ENCODE measurements at regions of chr1 and their contacts with region 1.

Region 1: DNA sequence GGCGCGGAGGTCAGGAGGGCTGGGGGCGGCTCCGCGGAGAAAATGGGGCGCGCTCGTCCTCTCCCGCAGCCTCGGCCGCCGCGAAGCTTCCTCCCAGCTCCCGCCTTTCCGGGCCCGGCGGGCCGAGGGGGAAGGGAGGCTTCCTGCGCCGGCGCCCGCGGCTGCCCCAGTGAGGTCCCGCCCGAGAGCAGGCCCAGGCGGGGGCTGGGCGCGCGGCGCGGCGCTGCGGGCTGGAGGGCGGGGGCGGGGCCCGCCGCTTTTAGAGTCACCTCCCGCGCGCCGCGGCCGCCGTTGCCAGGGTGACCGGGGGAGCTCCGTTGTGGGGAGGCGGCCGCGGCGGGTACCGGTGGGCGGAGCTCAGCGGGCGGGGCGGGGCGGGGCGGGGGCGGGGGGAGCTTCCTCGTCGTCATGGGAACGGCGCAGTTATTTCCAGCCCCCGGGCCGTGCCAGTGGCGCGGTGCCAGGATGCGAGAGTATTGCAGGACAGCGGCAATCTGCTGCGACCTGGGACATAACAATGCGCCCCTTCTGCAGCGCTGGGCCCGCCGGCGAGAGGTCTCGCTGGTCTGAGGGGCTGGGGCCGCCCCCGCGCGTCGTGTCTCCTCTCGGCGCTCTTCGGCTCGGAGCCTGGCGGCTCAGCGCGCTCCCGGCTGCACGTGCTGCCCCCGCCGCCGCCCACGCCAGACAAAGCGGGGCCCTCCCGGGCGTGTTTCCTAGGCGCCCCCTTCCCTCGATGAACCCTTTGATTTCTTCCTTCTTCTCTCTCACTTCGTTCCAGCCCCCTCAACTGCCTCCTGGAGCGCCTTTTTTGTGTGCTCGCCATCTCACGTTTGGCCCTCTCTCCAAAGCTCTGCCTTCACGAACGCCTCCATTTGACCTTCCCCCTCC is 16.9 kb downstream of the IER5 start:
- DNase-seq: peak; percentile 83
- ATAC-seq: peak; percentile 93
- H3K4me3 ChIP-seq: peak overlapping the region; percentile 84
- H3K27ac ChIP-seq: peak overlapping the region; percentile 86
- H3K4me1 ChIP-seq: peaks cover 30% of the 10 kb centered on the region
- H3K27me3 ChIP-seq: no peaks in the 10 kb centered on the region
- CTCF ChIP-seq: no peak
- POLR2A ChIP-seq: peak; percentile 53
- RAD21 ChIP-seq: no peak

Region 2: GRCh38 chr1:181028196-181028595 is 77.2 kb before region 1 on chr1:
- CTCF ChIA-PET with region 1: no interaction called
- POLR2A ChIA-PET with region 1: no interaction called
- dilution Hi-C with region 1: no loop called
- in situ Hi-C with region 1: no loop called
- intact Hi-C with region 1: loop called (anchors 2 kb)
- DNase-seq: peak; percentile 86
- ATAC-seq: peak; percentile 79
- H3K4me3 ChIP-seq: no peak overlapping the region
- H3K27ac ChIP-seq: no peak overlapping the region
- H3K4me1 ChIP-seq: peaks cover 6% of the 10 kb centered on the region
- H3K27me3 ChIP-seq: no peaks in the 10 kb centered on the region
- CTCF ChIP-seq: no peak
- POLR2A ChIP-seq: no peak
- RAD21 ChIP-seq: no peak

Region 3: DNA sequence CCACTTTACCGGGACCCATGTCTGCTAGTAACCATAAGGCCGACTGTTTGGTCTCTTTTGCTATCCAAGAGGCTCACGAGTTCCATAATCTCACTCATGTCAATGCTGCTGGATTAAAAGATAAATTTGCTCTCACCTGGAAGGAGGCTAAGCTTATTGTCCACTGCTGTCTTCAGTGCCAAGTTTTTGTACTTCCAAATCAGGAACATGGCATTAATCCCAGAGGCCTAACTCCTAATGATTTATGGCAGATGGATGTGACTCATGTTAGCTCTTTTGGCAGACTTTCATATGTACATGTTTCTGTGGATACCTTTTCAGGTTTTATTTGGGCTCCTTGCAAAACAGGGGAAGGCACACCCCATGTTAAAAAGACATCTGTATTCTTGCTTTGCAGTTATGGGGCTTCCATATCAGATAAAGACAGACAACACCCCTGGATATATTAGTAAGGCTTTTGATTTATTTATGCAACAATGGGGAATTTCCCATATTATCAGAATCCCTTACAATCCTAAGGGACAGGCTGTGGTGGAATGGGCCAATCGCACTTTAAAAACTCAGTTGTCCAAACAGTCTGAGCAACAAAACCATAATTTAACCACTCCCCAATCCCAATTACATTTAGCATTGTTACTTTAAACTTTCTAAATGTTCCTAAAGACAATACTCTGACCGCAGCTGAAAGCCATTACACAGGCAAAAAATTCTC is 145.8 kb after region 1 on chr1:
- CTCF ChIA-PET with region 1: no interaction called
- POLR2A ChIA-PET with region 1: no interaction called
- dilution Hi-C with region 1: no loop called
- in situ Hi-C with region 1: no loop called
- intact Hi-C with region 1: no loop called
- DNase-seq: peak; percentile 57
- ATAC-seq: no peak
- H3K4me3 ChIP-seq: no peak overlapping the region
- H3K27ac ChIP-seq: no peak overlapping the region
- H3K4me1 ChIP-seq: no peaks in the 10 kb centered on the region
- H3K27me3 ChIP-seq: no peaks in the 10 kb centered on the region
- CTCF ChIP-seq: no peak
- POLR2A ChIP-seq: no peak
- RAD21 ChIP-seq: no peak